Natural killer cell (primary cell): ENCODE measurements at regions of chr14 and their contacts with region 1.

Region 1: DNA sequence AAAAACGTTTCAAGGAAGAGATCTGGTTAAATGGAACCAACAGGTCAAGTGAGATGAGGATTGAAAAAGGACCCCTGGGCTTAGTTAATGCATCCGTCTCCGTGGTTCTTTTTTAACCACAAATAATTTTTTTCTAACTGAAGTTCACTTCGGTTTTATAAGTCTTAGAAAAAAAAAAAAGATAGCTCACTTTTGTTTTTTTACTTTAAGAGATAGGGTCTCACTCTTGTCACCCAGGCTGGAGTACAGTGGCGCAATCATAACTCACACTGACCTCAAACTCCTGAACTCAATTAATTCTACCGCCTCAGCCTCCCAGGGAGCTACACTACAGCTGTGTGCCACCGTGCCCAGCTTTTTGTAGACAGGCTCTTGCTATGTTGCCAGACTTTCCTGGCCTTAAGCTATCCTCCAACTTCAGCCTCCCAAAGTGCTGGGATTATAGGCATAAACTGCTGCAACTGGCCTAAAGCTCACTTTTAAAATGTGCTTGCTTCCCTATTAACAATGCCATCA is 11.8 kb downstream of the HNRNPC start:
- DNase-seq: peak in 1 of 2 donors; percentile 39
- ATAC-seq: peak; percentile 32 to 58 (median 55)
- H3K4me3 ChIP-seq: no peak overlapping the region
- H3K4me3 Mint-ChIP-seq: peak overlapping the region; percentile 70
- H3K27ac ChIP-seq: peak overlapping the region; percentile 36
- H3K27ac Mint-ChIP-seq: peak overlapping the region; percentile 64 to 70
- H3K4me1 ChIP-seq: peaks cover 56% of the 10 kb centered on the region
- H3K4me1 Mint-ChIP-seq: peaks cover 66 to 77% of the 10 kb centered on the region in 2 donors
- H3K27me3 ChIP-seq: no peaks in the 10 kb centered on the region
- H3K27me3 Mint-ChIP-seq: no peaks in the 10 kb centered on the region
- CTCF ChIP-seq: no peak

Region 2: GRCh38 chr14:21241218-21241819 is 16.1 kb before region 1 on chr14:
- intact Hi-C with region 1: loop called (anchors 2 kb)
- DNase-seq: peak in 1 of 2 donors; percentile 68
- ATAC-seq: peak in 1 of 3 donors; percentile 29
- H3K4me3 ChIP-seq: no peak overlapping the region
- H3K4me3 Mint-ChIP-seq: no peak overlapping the region
- H3K27ac ChIP-seq: no peak overlapping the region
- H3K27ac Mint-ChIP-seq: peak overlapping the region; percentile 53 to 83
- H3K4me1 ChIP-seq: peaks cover 22% of the 10 kb centered on the region
- H3K4me1 Mint-ChIP-seq: peaks cover 62 to 65% of the 10 kb centered on the region in 2 donors
- H3K27me3 ChIP-seq: no peaks in the 10 kb centered on the region
- H3K27me3 Mint-ChIP-seq: no peaks in the 10 kb centered on the region
- CTCF ChIP-seq: peak; percentile 70

Region 3: GRCh38 chr14:21467616-21468015 is 210.2 kb after region 1 on chr14:
- intact Hi-C with region 1: no loop called
- DNase-seq: no peak
- ATAC-seq: no peak
- H3K4me3 ChIP-seq: no peak overlapping the region
- H3K4me3 Mint-ChIP-seq: no peak overlapping the region
- H3K27ac ChIP-seq: no peak overlapping the region
- H3K27ac Mint-ChIP-seq: no peak overlapping the region
- H3K4me1 ChIP-seq: no peaks in the 10 kb centered on the region
- H3K4me1 Mint-ChIP-seq: peaks cover 0 to 5% of the 10 kb centered on the region in 2 donors
- H3K27me3 ChIP-seq: no peaks in the 10 kb centered on the region
- H3K27me3 Mint-ChIP-seq: no peaks in the 10 kb centered on the region
- CTCF ChIP-seq: no peak